ENCODE measurements at regions of chr2 and their contacts with region 1.

Region 1: DNA sequence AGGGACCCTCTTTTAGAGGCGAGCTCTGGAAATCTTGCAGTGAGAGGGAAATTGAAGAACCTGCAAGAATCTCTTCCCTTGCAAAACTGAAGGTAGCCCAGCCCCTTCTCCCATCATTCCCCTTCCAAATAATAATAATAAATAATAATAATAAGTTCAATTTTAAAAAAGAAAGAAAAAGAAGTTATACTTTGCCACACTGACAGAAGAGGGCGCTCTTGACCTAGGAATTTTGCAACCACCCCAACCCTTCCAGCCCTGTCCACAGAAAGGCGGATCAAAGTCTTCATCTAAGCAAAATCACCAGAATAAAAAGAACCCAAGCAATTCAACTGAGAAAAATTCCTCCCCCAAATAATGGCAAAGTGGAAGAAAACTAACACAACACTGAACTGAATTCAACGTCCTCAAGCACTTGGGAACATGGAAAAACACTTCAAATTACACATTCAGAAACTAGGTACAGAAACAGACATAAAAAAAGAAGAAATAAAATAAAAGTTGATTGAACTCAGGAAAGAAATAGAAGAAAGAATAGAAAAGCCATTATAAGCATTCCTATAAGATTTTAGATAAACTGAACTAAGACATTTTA is 98.9 kb upstream of the GLS start:
- DNase-seq: no peak
- H3K4me3 ChIP-seq: no peak overlapping the region
- H3K27ac ChIP-seq: no peak overlapping the region
- H3K4me1 ChIP-seq: peaks cover 0 to 11% (median 9%) of the 10 kb centered on the region in 4 donors
- H3K27me3 ChIP-seq: no peaks in the 10 kb centered on the region
- CTCF ChIP-seq: peak; percentile 61 to 66 (median 65)
- EP300 ChIP-seq: no peak
- POLR2A ChIP-seq: no peak

Region 2: GRCh38 chr2:190961918-190962487 is 180.3 kb after region 1 on chr2:
- intact Hi-C with region 1: loop called (anchors 10 kb)
- DNase-seq: no peak
- H3K4me3 ChIP-seq: no peak overlapping the region
- H3K27ac ChIP-seq: no peak overlapping the region
- H3K4me1 ChIP-seq: no peaks in the 10 kb centered on the region
- H3K27me3 ChIP-seq: no peaks in the 10 kb centered on the region
- CTCF ChIP-seq: no peak
- EP300 ChIP-seq: no peak
- POLR2A ChIP-seq: no peak

Region 3: GRCh38 chr2:191030521-191031154 is 248.9 kb after region 1 on chr2:
- intact Hi-C with region 1: loop called (anchors 5 kb)
- DNase-seq: no peak
- H3K4me3 ChIP-seq: peak overlapping the region in 1 of 4 donors; percentile 8
- H3K27ac ChIP-seq: no peak overlapping the region
- H3K4me1 ChIP-seq: peaks cover 0 to 8% (median 4%) of the 10 kb centered on the region in 4 donors
- H3K27me3 ChIP-seq: peaks cover 0 to 3% (median 0%) of the 10 kb centered on the region in 4 donors
- CTCF ChIP-seq: peak; percentile 58 to 72 (median 61)
- EP300 ChIP-seq: no peak
- POLR2A ChIP-seq: no peak